ENCODE measurements at regions of chr14 and their contacts with region 1.

Region 1: GRCh38 chr14:37903343-37904191 is 304.1 kb upstream of the SSTR1 start:
- DNase-seq: peak; percentile 59
- ATAC-seq: peak; percentile 72
- H3K4me3 ChIP-seq: no peak overlapping the region
- H3K27ac ChIP-seq: no peak overlapping the region
- H3K4me1 ChIP-seq: 0 out of 2 replicates have a peak, but pooled peaks cover 2% of the 10 kb centered on the region
- H3K27me3 ChIP-seq: no peaks in the 10 kb centered on the region; the same call in 1 of the 2 replicates
- CTCF ChIP-seq: peak; percentile 77
- POLR2A ChIP-seq: no peak
- RAD21 ChIP-seq: peak; percentile 76

Region 2: DNA sequence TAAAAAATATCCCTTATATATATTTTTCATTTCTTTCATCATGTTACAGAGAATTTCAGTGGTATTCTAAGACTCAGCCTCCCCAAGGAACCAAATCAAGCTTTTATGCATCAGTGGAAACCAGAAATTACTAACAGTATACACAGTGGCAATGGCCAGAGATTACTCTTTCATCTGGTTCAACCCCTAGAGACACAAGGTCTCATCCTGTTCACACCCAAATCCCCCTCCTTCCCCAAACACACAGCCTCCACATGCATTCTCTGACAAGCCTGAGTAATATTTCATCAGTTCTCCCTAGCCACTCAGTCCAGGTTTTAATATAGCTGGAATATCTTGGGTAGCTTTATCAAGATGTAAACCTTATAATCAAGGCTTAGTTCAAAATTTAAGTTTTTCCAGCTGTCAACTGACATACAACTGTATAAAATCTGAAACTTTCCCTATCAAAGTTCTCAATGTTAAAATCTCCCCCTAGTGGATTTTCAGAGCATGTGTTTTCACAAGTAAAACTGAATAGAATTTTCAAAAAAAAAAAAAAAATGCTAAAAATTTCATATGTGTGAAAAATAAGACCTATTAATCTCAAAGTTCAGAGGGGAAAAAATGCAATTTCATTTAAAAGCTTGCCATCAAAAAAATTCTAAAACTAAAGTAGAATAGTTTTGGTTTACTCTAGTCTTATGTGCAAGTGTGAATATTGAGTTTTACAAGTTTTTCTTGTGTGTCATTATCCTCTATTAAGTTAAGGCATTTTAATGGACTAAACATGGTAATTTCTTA is 293.6 kb after region 1 on chr14:
- CTCF ChIA-PET with region 1: interaction called, 6 read pairs
- POLR2A ChIA-PET with region 1: no interaction called
- dilution Hi-C with region 1: no loop called
- in situ Hi-C with region 1: loop called (anchors 10 kb)
- intact Hi-C with region 1: loop called (anchors 2 kb)
- DNase-seq: peak; percentile 38
- ATAC-seq: peak; percentile 67; the same call in 1 of the 2 replicates
- H3K4me3 ChIP-seq: no peak overlapping the region
- H3K27ac ChIP-seq: no peak overlapping the region
- H3K4me1 ChIP-seq: peaks cover 9% of the 10 kb centered on the region
- H3K27me3 ChIP-seq: no peaks in the 10 kb centered on the region
- CTCF ChIP-seq: peak; percentile 53
- POLR2A ChIP-seq: no peak
- RAD21 ChIP-seq: peak; percentile 53

Region 3: DNA sequence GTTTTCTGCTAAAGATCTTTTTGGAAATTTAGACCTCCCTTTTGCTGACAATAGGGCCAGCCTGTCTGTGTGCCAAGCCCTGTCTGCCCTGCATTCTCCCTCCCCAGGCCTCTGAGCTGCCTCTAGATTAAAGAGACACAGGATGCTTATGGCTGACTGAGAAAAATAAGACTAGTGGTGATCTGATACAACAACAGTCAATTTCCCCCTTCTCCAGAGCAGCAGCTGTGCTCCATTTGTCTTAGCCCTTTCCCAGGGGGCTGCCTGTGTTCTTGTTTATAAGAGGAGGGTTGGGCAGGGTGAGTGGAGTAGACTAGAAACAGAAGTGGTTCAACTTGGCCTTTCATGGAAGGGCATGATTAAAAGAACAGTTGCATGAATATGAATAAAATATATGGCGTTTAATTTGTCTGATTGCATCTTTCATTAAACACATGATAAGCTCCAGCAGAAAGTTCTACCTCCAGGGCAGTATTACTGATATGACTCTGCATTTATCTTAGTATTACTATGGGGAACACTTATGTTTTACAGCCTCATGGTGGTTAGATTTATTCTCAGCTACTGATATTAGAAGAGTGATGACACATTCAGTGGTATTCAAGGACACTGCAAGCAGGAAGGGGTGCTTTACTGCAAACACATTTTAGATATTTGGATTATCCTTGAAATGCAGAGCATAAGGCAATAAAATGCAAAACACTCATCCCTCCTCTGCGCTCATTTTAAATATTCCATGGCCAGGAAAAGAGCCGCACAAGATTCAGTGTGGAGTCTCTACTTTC is 502.5 kb after region 1 on chr14:
- CTCF ChIA-PET with region 1: no interaction called
- POLR2A ChIA-PET with region 1: no interaction called
- dilution Hi-C with region 1: no loop called
- in situ Hi-C with region 1: no loop called
- intact Hi-C with region 1: loop called (anchors 5 kb)
- DNase-seq: peak; percentile 66
- ATAC-seq: peak; percentile 40
- H3K4me3 ChIP-seq: no peak overlapping the region
- H3K27ac ChIP-seq: peak overlapping the region; percentile 66
- H3K4me1 ChIP-seq: peaks cover 17% of the 10 kb centered on the region
- H3K27me3 ChIP-seq: no peaks in the 10 kb centered on the region
- CTCF ChIP-seq: no peak
- POLR2A ChIP-seq: no peak
- RAD21 ChIP-seq: no peak

Region 4: GRCh38 chr14:38605193-38606114 is 701.9 kb after region 1 on chr14:
- CTCF ChIA-PET with region 1: interaction called, 4 read pairs
- POLR2A ChIA-PET with region 1: no interaction called
- dilution Hi-C with region 1: no loop called
- in situ Hi-C with region 1: no loop called
- intact Hi-C with region 1: loop called (anchors 1 kb)
- DNase-seq: no peak
- ATAC-seq: no peak
- H3K4me3 ChIP-seq: no peak overlapping the region
- H3K27ac ChIP-seq: no peak overlapping the region
- H3K4me1 ChIP-seq: no peaks in the 10 kb centered on the region
- H3K27me3 ChIP-seq: no peaks in the 10 kb centered on the region
- CTCF ChIP-seq: 0 out of 2 replicates have a peak, but pooled peaks have one; percentile 7
- POLR2A ChIP-seq: no peak
- RAD21 ChIP-seq: no peak

Region 5: DNA sequence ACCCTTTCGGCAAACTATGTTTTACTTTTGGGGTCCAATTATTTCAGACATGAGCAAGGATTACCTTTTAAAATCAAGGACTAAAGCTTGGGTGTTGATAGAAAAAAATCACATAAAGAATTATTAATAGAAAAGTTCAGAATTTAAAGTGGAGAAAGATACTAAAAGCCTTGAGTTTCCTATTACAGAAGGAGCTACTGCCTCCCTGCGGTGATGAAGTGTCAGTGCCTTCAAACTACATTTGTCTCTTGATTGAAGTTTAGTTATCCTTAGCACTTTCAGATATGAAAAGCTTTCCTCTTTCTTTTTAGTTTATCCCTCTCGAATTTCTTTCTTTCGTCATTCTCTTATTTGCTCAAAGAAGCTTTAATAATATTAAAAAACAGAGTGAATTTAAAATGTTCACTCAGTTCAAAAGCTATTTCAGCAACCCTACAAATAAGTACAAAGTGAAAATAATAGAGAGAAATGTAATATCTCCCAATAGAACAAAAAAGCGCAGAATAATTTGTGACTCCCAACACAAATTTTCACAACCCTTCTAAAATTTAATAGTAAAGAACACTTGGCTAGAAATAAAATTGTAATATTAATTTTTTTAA is 1111.9 kb after region 1 on chr14:
- CTCF ChIA-PET with region 1: interaction called, 3 read pairs
- POLR2A ChIA-PET with region 1: no interaction called
- dilution Hi-C with region 1: no loop called
- in situ Hi-C with region 1: loop called (anchors 25 kb)
- intact Hi-C with region 1: loop called (anchors 5 kb)
- DNase-seq: peak; percentile 59
- ATAC-seq: peak; percentile 84
- H3K4me3 ChIP-seq: no peak overlapping the region
- H3K27ac ChIP-seq: no peak overlapping the region
- H3K4me1 ChIP-seq: 0 out of 2 replicates have a peak, but pooled peaks cover 2% of the 10 kb centered on the region
- H3K27me3 ChIP-seq: no peaks in the 10 kb centered on the region
- CTCF ChIP-seq: peak; percentile 74
- POLR2A ChIP-seq: no peak
- RAD21 ChIP-seq: peak; percentile 69

Measured in IMR-90 (cell line).